Left cardiac atrium (tissue), 4 donors: ENCODE measurements at regions of chr6 and their contacts with region 1.

Region 1: DNA sequence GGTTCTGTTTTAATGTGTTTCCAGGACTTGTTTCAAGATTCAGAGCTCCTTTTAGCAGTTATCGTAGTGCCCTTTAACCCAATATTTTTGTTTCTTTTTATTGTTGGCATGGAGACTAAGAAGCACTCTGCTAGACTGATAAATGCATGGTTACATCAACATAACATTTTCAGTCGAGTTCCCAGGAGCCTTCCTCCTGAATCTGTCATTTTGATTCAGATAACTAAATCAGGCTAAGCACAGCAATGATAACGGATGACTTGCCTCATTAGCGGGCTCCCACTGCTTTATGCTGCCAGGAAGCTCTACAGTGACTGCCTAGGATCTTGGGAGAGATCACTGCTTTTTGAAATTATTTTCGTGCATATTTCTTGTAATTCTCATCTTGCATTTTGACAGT is 772.8 kb upstream of the GJE1 start:
- DNase-seq: peak; percentile 26
- ATAC-seq: peak; percentile 71 to 100

Region 2: DNA sequence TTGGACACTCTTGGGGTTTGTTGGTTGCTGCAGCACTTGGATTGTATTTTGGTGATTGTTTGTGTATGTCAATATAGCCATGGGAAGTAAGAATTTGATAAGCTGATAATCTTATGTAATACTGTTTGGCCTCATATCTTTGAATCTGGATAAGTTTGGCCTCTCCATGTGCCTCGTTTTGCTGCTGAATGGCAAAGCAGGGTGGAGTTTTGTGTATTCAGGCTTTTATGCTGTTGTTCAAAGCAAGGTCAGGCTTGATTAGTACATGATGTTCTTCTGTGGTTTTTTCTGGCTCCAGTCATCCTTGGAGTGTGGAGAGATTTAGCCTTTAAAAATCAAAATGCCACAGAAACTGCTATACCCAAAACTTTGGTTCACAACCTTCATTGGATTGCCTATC is 43.8 kb after region 1 on chr6:
- intact Hi-C with region 1: loop called in 1 of 2 experiments (anchors 5 kb)
- DNase-seq: no peak
- ATAC-seq: peak; percentile 35 to 66

Region 3: GRCh38 chr6:141688916-141689315 is 329.0 kb after region 1 on chr6:
- intact Hi-C with region 1: no loop called
- DNase-seq: no peak
- ATAC-seq: no peak